GM10248 (cell line): ENCODE measurements at regions of chr3 and their contacts with region 1.

Region 1: DNA sequence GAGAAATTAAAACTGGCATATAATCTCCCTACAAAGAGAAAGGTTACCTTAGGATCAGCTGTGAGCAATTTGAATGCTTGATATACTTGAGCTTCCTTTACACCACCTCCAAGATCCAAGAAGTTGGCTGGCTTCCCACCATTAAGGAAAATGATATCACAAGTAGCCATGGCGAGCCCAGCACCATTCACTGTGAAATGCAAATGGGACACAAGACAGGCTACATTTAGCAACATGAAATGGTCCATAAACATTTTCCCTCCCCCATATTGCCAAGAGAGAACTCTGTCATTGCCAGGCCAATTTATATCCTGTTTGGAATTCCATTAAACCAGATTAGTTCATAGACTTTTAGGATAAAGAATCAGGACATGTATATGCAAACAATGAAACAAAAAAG is 158.7 kb downstream of the SUCLG2 start:
- DNase-seq: no peak
- CTCF ChIP-seq: no peak

Region 2: GRCh38 chr3:67509471-67510075 is 13.8 kb after region 1 on chr3:
- CTCF ChIA-PET with region 1: interaction called, 14 read pairs
- POLR2A ChIA-PET with region 1: no interaction called
- DNase-seq: no peak
- CTCF ChIP-seq: no peak